MCF 10A (cell line): ENCODE measurements at regions of chr1 and their contacts with region 1.

Region 1: GRCh38 chr1:114346480-114347029 is 164.4 kb downstream of the TRIM33 start:
- DNase-seq: peak; percentile 93
- H3K4me3 Mint-ChIP-seq: peak overlapping the region; percentile 84
- H3K27ac Mint-ChIP-seq: peak overlapping the region; percentile 85
- H3K4me1 Mint-ChIP-seq: peaks cover 4% of the 10 kb centered on the region
- H3K27me3 Mint-ChIP-seq: no peaks in the 10 kb centered on the region
- CTCF ChIP-seq: peak; percentile 100

Region 2: GRCh38 chr1:114368560-114369246 is 22.1 kb after region 1 on chr1:
- CTCF ChIA-PET with region 1: interaction called, 12 read pairs
- POLR2A ChIA-PET with region 1: no interaction called
- intact Hi-C with region 1: no loop called
- DNase-seq: no peak
- H3K4me3 Mint-ChIP-seq: no peak overlapping the region
- H3K27ac Mint-ChIP-seq: peak overlapping the region; percentile 64
- H3K4me1 Mint-ChIP-seq: peaks cover 5% of the 10 kb centered on the region
- H3K27me3 Mint-ChIP-seq: no peaks in the 10 kb centered on the region
- CTCF ChIP-seq: no peak

Region 3: DNA sequence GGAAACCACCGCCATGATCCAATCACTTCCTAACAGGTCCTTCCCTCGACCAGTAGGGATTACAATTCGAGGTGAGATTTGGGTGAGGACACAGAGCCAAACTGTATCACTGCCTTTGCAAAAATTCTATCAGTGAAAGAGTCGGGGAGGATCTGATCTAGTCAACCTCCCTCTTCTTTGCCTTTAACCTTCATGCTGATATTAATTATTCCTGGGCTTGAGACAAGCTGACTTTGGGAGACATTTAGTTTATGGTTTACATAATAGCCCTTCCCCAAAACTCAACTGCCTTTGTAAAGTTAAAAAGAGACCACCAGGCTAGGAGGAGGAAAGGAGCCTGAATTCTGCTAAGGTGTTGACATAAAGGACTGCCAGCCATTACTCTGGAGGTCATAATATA is 71.7 kb after region 1 on chr1:
- CTCF ChIA-PET with region 1: interaction called, 13 read pairs
- POLR2A ChIA-PET with region 1: no interaction called
- intact Hi-C with region 1: no loop called
- DNase-seq: no peak
- H3K4me3 Mint-ChIP-seq: no peak overlapping the region
- H3K27ac Mint-ChIP-seq: no peak overlapping the region
- H3K4me1 Mint-ChIP-seq: peaks cover 5% of the 10 kb centered on the region
- H3K27me3 Mint-ChIP-seq: no peaks in the 10 kb centered on the region
- CTCF ChIP-seq: no peak

Region 4: GRCh38 chr1:114558544-114558943 is 212.0 kb after region 1 on chr1:
- CTCF ChIA-PET with region 1: interaction called, 66 read pairs
- POLR2A ChIA-PET with region 1: no interaction called
- intact Hi-C with region 1: loop called (anchors 1 kb)
- DNase-seq: peak; percentile 24
- H3K4me3 Mint-ChIP-seq: no peak overlapping the region
- H3K27ac Mint-ChIP-seq: no peak overlapping the region
- H3K4me1 Mint-ChIP-seq: no peaks in the 10 kb centered on the region
- H3K27me3 Mint-ChIP-seq: no peaks in the 10 kb centered on the region
- CTCF ChIP-seq: peak; percentile 46